ENCODE measurements at regions of chr15 and their contacts with region 1.

Region 1: DNA sequence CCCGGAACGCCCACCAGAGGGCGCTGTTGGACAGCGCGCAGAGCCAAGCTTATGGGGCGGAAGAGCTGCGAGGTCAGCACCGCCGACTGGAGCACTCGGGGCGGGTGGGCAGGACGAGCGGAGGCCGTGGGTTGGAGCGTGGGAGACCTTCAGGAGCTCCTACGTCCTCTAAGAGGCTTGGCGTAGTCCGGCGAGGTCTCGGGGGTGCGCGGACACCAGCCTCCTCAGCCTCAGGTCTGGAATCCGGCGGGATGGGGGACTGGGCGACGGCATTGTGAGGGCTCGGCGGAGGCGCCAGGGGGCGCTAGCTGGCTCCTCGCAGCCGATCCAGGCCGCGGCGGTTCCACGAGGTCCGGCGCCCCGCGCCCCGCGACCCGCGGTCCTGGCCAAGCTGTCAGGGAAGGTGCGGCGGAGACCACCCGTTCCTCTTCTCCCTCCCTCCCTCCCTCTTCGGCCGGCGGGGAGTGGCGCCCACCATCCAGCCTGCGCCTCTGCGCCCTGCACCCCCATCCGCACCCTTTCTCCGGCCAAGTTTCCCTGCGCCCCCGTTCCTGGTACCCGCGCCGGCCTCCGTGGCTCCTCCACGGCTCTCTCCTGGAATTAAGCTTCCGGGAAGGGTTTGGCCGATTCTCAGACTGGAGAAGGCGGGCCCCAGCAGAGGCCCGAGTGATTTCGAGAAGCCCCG is 24.3 kb upstream of the POLG start:
- DNase-seq: peak; percentile 92
- ATAC-seq: peak; percentile 94
- H3K4me3 ChIP-seq: peak overlapping the region in 4 of 5 experiments; percentile 41 to 63 (median 52)
- H3K4me3 Mint-ChIP-seq: peak overlapping the region; percentile 88
- H3K27ac ChIP-seq: no peak overlapping the region
- H3K27ac Mint-ChIP-seq: peak overlapping the region; percentile 46
- H3K4me1 ChIP-seq: peaks cover 26 to 41% of the 10 kb centered on the region in 2 donors
- H3K4me1 Mint-ChIP-seq: peaks cover 16% of the 10 kb centered on the region
- H3K27me3 ChIP-seq: peaks cover 0 to 83% (median 56%) of the 10 kb centered on the region in 4 experiments
- H3K27me3 Mint-ChIP-seq: peaks cover 70% of the 10 kb centered on the region
- CTCF ChIP-seq: peak; percentile 99

Region 2: GRCh38 chr15:89070197-89071124 is 288.4 kb before region 1 on chr15:
- CTCF ChIA-PET with region 1: no interaction called
- POLR2A ChIA-PET with region 1: no interaction called
- intact Hi-C with region 1: no loop called
- DNase-seq: no peak
- ATAC-seq: no peak
- H3K4me3 ChIP-seq: no peak overlapping the region
- H3K4me3 Mint-ChIP-seq: no peak overlapping the region
- H3K27ac ChIP-seq: no peak overlapping the region
- H3K27ac Mint-ChIP-seq: no peak overlapping the region
- H3K4me1 ChIP-seq: peaks cover 0 to 3% of the 10 kb centered on the region in 2 donors
- H3K4me1 Mint-ChIP-seq: no peaks in the 10 kb centered on the region
- H3K27me3 ChIP-seq: peaks cover 0 to 17% (median 0%) of the 10 kb centered on the region in 4 experiments
- H3K27me3 Mint-ChIP-seq: peaks cover 19% of the 10 kb centered on the region
- CTCF ChIP-seq: no peak

Region 3: GRCh38 chr15:89334510-89335288 is 24.2 kb before region 1 on chr15 and contains the start of gene POLG:
- CTCF ChIA-PET with region 1: interaction called, 26 read pairs
- POLR2A ChIA-PET with region 1: interaction called, 5 read pairs
- intact Hi-C with region 1: loop called (anchors 1 kb)
- DNase-seq: peak; percentile 100
- ATAC-seq: peak; percentile 92
- H3K4me3 ChIP-seq: peak within 1 kb of the TSS; percentile 58 to 92 (median 82)
- H3K4me3 Mint-ChIP-seq: peak within 1 kb of the TSS; percentile 97
- H3K27ac ChIP-seq: peak within 1 kb of the TSS; percentile 55 to 90
- H3K27ac Mint-ChIP-seq: peak within 1 kb of the TSS; percentile 99
- H3K4me1 ChIP-seq: peaks cover 26 to 54% of the 10 kb centered on the region in 2 donors
- H3K4me1 Mint-ChIP-seq: peaks cover 47% of the 10 kb centered on the region
- H3K27me3 ChIP-seq: no peaks in the 10 kb centered on the region
- H3K27me3 Mint-ChIP-seq: peaks cover 4% of the 10 kb centered on the region
- CTCF ChIP-seq: no peak
- total RNA-seq, gene POLG: 144 and 151 TPM in 2 replicates

Region 4: GRCh38 chr15:89378296-89379151 is 19.6 kb after region 1 on chr15:
- CTCF ChIA-PET with region 1: interaction called, 39 read pairs
- POLR2A ChIA-PET with region 1: no interaction called
- intact Hi-C with region 1: no loop called
- DNase-seq: peak; percentile 64
- ATAC-seq: peak; percentile 65
- H3K4me3 ChIP-seq: peak overlapping the region; percentile 28 to 57 (median 51)
- H3K4me3 Mint-ChIP-seq: peak overlapping the region; percentile 81
- H3K27ac ChIP-seq: no peak overlapping the region
- H3K27ac Mint-ChIP-seq: peak overlapping the region; percentile 81
- H3K4me1 ChIP-seq: peaks cover 20 to 29% of the 10 kb centered on the region in 2 donors
- H3K4me1 Mint-ChIP-seq: peaks cover 14% of the 10 kb centered on the region
- H3K27me3 ChIP-seq: peaks cover 0 to 81% (median 66%) of the 10 kb centered on the region in 4 experiments
- H3K27me3 Mint-ChIP-seq: peaks cover 72% of the 10 kb centered on the region
- CTCF ChIP-seq: no peak

Region 5: DNA sequence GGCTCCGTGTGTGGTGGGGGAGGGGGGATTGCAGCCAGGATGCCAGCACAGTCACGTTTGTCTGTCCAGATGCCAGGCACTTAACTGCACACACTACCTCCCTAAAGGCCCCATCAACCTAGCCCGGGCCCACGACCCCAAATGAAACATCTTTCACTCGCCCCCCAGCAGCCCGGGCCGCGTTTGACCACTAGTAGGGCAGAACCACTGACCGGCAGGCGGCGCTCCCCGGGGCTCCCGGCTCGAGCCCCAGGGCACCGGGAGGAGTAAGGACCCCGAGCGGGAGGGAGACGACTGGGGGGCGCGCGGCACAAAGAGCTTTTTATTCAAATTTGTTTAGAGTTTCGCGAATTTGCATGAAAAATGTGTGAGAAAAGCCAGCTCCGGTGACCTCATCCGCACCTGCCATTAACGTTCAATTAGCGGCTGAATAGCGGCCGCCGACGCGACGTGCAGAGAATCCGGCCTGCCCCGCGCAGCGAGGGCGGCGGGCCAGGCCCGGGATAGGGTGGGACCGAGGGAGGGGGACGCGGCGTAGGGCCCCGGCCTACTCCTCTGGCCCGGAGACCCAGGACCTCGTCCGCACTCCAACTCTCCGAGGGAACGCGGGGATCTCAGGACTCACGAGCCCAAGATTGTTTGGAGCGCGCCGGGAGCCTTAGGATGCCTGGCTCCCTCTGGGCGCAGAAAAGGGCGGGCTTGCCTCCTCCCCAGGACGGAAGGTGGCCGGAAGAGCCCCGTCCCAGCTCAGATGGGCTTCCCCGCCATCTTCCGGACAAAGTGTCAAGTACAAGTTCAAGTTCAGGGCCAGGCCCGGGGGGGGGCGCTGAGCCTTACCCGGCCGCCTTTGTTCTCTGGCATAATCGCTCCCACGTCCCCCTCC is 40.6 kb after region 1 on chr15:
- CTCF ChIA-PET with region 1: interaction called, 17 read pairs
- POLR2A ChIA-PET with region 1: no interaction called
- intact Hi-C with region 1: no loop called
- DNase-seq: peak; percentile 67
- ATAC-seq: peak; percentile 65
- H3K4me3 ChIP-seq: peak overlapping the region in 4 of 5 experiments; percentile 52 to 64 (median 57)
- H3K4me3 Mint-ChIP-seq: peak overlapping the region; percentile 87
- H3K27ac ChIP-seq: no peak overlapping the region
- H3K27ac Mint-ChIP-seq: peak overlapping the region; percentile 71
- H3K4me1 ChIP-seq: peaks cover 25 to 35% of the 10 kb centered on the region in 2 donors
- H3K4me1 Mint-ChIP-seq: peaks cover 24% of the 10 kb centered on the region
- H3K27me3 ChIP-seq: peaks cover 3 to 76% (median 52%) of the 10 kb centered on the region in 4 experiments
- H3K27me3 Mint-ChIP-seq: peaks cover 68% of the 10 kb centered on the region
- CTCF ChIP-seq: peak; percentile 46

Region 6: GRCh38 chr15:89430530-89431341 is 71.8 kb after region 1 on chr15:
- CTCF ChIA-PET with region 1: interaction called, 126 read pairs
- POLR2A ChIA-PET with region 1: no interaction called
- intact Hi-C with region 1: loop called (anchors 1 kb)
- DNase-seq: peak; percentile 90
- ATAC-seq: peak; percentile 97
- H3K4me3 ChIP-seq: peak overlapping the region; percentile 19 to 68 (median 50)
- H3K4me3 Mint-ChIP-seq: peak overlapping the region; percentile 94
- H3K27ac ChIP-seq: no peak overlapping the region
- H3K27ac Mint-ChIP-seq: peak overlapping the region; percentile 17
- H3K4me1 ChIP-seq: peaks cover 4 to 10% of the 10 kb centered on the region in 2 donors
- H3K4me1 Mint-ChIP-seq: peaks cover 7% of the 10 kb centered on the region
- H3K27me3 ChIP-seq: peaks cover 0 to 25% (median 3%) of the 10 kb centered on the region in 4 experiments
- H3K27me3 Mint-ChIP-seq: peaks cover 25% of the 10 kb centered on the region
- CTCF ChIP-seq: peak; percentile 98

Region 7: GRCh38 chr15:89442671-89443307 is 83.9 kb after region 1 on chr15:
- CTCF ChIA-PET with region 1: interaction called, 17 read pairs
- POLR2A ChIA-PET with region 1: no interaction called
- intact Hi-C with region 1: no loop called
- DNase-seq: peak; percentile 41
- ATAC-seq: no peak
- H3K4me3 ChIP-seq: no peak overlapping the region
- H3K4me3 Mint-ChIP-seq: peak overlapping the region; percentile 37
- H3K27ac ChIP-seq: no peak overlapping the region
- H3K27ac Mint-ChIP-seq: no peak overlapping the region
- H3K4me1 ChIP-seq: peaks cover 29 to 34% of the 10 kb centered on the region in 2 donors
- H3K4me1 Mint-ChIP-seq: peaks cover 33% of the 10 kb centered on the region
- H3K27me3 ChIP-seq: peaks cover 0 to 15% (median 2%) of the 10 kb centered on the region in 4 experiments
- H3K27me3 Mint-ChIP-seq: peaks cover 23% of the 10 kb centered on the region
- CTCF ChIP-seq: peak; percentile 55

Region 8: GRCh38 chr15:89539002-89539401 is 180.1 kb after region 1 on chr15:
- CTCF ChIA-PET with region 1: no interaction called
- POLR2A ChIA-PET with region 1: no interaction called
- intact Hi-C with region 1: no loop called
- DNase-seq: no peak
- ATAC-seq: no peak
- H3K4me3 ChIP-seq: no peak overlapping the region
- H3K4me3 Mint-ChIP-seq: no peak overlapping the region
- H3K27ac ChIP-seq: no peak overlapping the region
- H3K27ac Mint-ChIP-seq: no peak overlapping the region
- H3K4me1 ChIP-seq: no peaks in the 10 kb centered on the region
- H3K4me1 Mint-ChIP-seq: no peaks in the 10 kb centered on the region
- H3K27me3 ChIP-seq: no peaks in the 10 kb centered on the region
- H3K27me3 Mint-ChIP-seq: peaks cover 33% of the 10 kb centered on the region
- CTCF ChIP-seq: no peak

Region 9: DNA sequence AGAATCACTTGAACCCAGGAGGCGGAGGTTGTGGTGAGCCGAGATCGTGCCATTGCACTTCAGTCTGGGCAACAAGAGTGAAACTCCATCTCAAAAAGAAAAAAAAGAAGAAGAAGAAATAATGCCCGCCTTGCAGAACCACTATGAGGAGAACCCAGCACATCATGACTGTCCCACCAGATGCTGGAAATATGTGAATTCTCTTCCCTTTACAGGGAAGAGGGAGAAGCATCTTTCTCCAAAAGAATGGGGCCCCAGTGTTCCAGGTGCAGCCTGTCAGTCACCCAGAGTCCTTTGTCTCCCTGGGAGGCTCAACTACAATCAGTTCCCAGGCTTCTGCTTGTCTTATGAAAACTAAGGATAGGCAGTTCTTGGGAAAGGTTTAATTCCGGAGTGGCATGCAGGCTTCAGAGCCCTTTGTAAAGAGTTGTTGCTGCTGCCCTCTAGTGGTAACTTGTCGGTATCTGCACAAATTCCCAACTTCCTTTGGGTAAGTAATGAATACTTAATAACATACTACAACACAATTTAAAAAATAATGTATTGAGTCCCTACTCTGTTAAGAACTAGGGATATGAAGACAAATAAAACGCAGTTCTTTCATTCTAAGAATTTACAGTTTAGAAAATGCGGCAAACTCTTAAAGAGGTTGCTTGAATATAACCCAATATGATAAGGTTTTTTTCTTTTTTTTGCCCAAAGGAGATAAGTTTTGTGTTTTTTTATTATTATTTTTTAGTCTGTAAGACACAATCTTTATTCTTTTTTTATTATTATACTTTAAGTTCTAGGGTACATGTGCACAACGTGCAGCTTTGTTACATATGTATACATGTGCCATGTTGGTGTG is 197.7 kb after region 1 on chr15:
- CTCF ChIA-PET with region 1: interaction called, 9 read pairs
- POLR2A ChIA-PET with region 1: no interaction called
- intact Hi-C with region 1: loop called (anchors 2 kb)
- DNase-seq: peak; percentile 68
- ATAC-seq: peak; percentile 43
- H3K4me3 ChIP-seq: no peak overlapping the region
- H3K4me3 Mint-ChIP-seq: no peak overlapping the region
- H3K27ac ChIP-seq: no peak overlapping the region
- H3K27ac Mint-ChIP-seq: no peak overlapping the region
- H3K4me1 ChIP-seq: no peaks in the 10 kb centered on the region
- H3K4me1 Mint-ChIP-seq: no peaks in the 10 kb centered on the region
- H3K27me3 ChIP-seq: peaks cover 0 to 6% (median 2%) of the 10 kb centered on the region in 4 experiments
- H3K27me3 Mint-ChIP-seq: peaks cover 15% of the 10 kb centered on the region
- CTCF ChIP-seq: peak; percentile 90

Measured in B cell (primary cell).